ENCODE measurements at regions of chr7 and their contacts with region 1.

Region 1: GRCh38 chr7:909358-910329 is 33.3 kb downstream of the GET4 start:
- DNase-seq: peak in 1 of 5 donors; percentile 46
- H3K4me3 ChIP-seq: no peak overlapping the region
- H3K4me3 Mint-ChIP-seq: peak overlapping the region; percentile 35 to 77 (median 72)
- H3K27ac ChIP-seq: no peak overlapping the region
- H3K27ac Mint-ChIP-seq: peak overlapping the region in 3 of 7 donors; percentile 65 to 68 (median 67)
- H3K4me1 ChIP-seq: peaks cover 10% of the 10 kb centered on the region
- H3K4me1 Mint-ChIP-seq: peaks cover 2 to 14% (median 10%) of the 10 kb centered on the region in 4 donors
- H3K27me3 ChIP-seq: no peaks in the 10 kb centered on the region
- H3K27me3 Mint-ChIP-seq: no peaks in the 10 kb centered on the region

Region 2: DNA sequence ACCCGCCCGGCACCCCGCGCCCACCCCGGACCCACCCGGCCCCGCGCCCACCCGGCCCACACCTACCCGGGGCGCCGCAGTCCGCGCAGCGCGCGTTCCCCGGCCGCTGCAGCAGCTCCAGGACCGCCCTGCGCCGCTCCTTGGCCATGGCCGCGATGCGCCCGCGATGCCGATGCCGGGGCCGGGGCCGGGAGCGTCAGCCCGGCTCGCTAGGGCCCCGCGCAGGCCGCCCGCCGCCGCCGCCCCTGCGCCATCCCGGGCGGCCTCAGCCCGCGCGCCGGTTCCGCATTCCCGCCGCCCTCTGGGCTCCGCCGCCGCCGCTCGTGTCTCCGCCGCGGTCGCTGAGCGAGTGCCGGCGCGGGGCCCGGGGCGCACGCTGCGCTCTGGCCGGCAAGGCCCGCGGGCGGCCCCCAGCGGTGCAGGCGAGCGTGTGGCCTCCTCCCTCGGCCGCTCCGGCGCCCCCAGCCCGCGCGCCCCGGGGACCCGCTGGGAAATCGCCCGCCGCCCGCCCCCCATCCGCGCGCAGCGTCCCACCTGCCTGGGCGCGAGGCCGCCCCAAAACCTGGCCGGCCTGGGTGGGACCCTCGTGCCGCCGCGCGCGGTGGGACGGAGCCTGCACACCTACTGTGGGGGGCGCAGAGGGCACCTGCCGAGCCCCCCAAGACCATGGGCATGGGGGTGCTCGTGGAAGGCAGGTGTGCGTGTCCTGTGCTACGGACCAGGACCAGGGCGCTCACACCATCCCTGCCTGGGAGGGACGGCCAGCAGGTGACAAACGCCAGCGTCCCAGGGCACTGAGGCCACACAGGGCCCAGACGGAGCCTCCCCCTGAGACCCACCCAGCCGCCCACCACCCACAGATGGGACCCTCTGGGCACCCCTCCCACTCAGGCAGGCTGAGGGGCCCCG is 44.9 kb after region 1 on chr7 and contains the start of gene ADAP1:
- CTCF ChIA-PET with region 1: interaction called, 19 read pairs
- POLR2A ChIA-PET with region 1: interaction called, 10 read pairs
- intact Hi-C with region 1: loop called (anchors 1 kb)
- DNase-seq: peak in 4 of 5 donors; percentile 55 to 64 (median 60)
- H3K4me3 ChIP-seq: no peak within 1 kb of the TSS
- H3K4me3 Mint-ChIP-seq: peak within 1 kb of the TSS; percentile 62 to 80 (median 72)
- H3K27ac ChIP-seq: no peak within 1 kb of the TSS
- H3K27ac Mint-ChIP-seq: peak within 1 kb of the TSS in 2 of 7 donors; percentile 69 to 83
- H3K4me1 ChIP-seq: peaks cover 5% of the 10 kb centered on the region
- H3K4me1 Mint-ChIP-seq: peaks cover 0 to 9% (median 0%) of the 10 kb centered on the region in 4 donors
- H3K27me3 ChIP-seq: no peaks in the 10 kb centered on the region
- H3K27me3 Mint-ChIP-seq: peaks cover 2 to 4% of the 10 kb centered on the region in 2 donors
- total RNA-seq, gene ADAP1: 9.7 to 10.0 TPM

Measured in CD4-positive, alpha-beta memory T cell (primary cell).